MCF 10A (cell line): ENCODE measurements at regions of chr1 and their contacts with region 1.

Region 1: GRCh38 chr1:152954434-152954833 is 7.4 kb downstream of the SPRR5 start:
- DNase-seq: peak; percentile 85
- H3K4me3 Mint-ChIP-seq: peak overlapping the region; percentile 48
- H3K27ac Mint-ChIP-seq: peak overlapping the region; percentile 5
- H3K4me1 Mint-ChIP-seq: peaks cover 24% of the 10 kb centered on the region
- H3K27me3 Mint-ChIP-seq: no peaks in the 10 kb centered on the region
- CTCF ChIP-seq: no peak

Region 2: DNA sequence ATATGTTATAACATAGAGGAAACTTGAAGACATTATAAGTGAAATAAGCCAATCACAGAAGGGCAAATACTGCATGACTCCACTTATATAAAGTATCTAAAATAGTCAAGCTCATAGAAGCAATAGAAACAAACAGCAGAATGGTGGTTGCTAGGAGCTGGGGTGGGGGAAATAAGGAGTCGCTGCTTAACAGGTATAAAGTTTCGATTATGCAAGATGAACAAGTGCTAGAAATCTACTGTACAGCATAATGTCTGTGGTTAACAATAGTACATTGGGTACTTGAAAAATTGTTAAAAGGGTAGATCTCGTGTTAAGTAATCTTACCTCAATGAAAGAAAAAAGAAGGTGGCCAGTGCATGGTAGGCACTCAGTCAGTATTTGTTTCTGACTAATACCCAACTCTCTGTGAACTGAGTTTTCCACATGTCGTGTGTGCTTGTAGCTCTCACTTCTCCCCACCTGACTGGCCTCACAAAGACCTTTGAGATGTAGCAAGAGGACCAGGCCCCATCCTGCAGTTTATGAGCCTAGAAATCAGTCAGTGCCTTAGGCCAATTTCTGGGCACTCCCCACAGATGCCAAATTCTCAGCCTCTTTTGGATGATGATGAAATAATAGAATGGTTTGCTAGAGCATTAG is 22.1 kb before region 1 on chr1:
- CTCF ChIA-PET with region 1: no interaction called
- POLR2A ChIA-PET with region 1: interaction called, 54 read pairs
- intact Hi-C with region 1: no loop called
- DNase-seq: peak; percentile 89
- H3K4me3 Mint-ChIP-seq: no peak overlapping the region
- H3K27ac Mint-ChIP-seq: peak overlapping the region; percentile 14
- H3K4me1 Mint-ChIP-seq: peaks cover 25% of the 10 kb centered on the region
- H3K27me3 Mint-ChIP-seq: no peaks in the 10 kb centered on the region
- CTCF ChIP-seq: no peak

Region 3: DNA sequence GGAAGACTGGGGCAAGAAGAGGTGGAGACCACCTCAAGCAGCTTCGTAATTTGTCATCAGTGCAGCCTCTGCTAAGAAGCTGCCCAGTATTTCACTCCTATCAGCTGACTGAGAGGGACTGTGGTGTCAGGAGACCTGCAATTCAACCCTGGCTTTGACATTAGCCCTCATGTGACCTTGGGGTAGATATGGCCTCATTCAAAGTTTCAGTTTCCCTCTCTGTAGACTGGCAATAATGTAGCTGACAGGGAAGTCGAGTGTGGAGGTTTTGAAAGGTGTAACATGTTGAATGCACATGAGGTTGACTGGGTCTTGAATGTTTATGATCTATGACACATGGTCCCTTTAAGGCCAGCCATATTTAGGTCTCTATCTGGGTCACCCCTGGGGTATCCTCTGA is 13.8 kb after region 1 on chr1:
- CTCF ChIA-PET with region 1: interaction called, 5 read pairs
- POLR2A ChIA-PET with region 1: interaction called, 30 read pairs
- intact Hi-C with region 1: no loop called
- DNase-seq: no peak
- H3K4me3 Mint-ChIP-seq: no peak overlapping the region
- H3K27ac Mint-ChIP-seq: no peak overlapping the region
- H3K4me1 Mint-ChIP-seq: peaks cover 21% of the 10 kb centered on the region
- H3K27me3 Mint-ChIP-seq: no peaks in the 10 kb centered on the region
- CTCF ChIP-seq: no peak

Region 4: DNA sequence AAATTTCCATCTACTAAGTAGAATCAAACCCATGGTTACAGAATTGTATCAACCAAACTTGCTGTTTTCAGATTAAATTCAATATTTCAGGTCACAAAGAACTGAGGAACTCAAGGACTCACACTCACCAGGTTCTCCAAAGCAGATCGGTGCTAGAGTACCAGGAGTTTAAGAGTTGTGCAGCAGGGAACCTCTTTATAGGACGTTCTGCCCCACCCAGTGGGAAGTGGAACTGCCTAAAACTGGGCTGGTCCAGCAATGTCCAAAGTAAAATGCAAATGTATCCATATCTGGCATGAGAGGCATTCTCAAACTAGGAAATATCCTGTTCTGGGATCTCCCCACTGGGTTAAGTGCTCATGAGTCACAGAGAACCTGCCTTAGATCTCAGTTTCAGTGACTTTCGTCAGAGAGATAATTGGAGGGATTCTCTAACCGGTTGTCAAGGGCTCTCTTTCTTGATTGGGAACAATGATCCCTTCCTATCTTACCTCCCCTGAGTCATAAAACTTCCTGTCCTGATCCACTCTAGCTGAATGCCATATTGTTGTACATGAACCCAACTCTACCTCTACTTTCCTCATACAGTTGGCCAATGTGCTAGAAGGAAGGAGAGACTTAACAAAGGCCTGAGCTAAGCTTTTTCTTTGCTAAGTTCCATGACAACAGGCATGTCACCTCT is 86.7 kb after region 1 on chr1 and contains the start of gene SPRR2D:
- CTCF ChIA-PET with region 1: no interaction called
- POLR2A ChIA-PET with region 1: interaction called, 10 read pairs
- intact Hi-C with region 1: no loop called
- DNase-seq: peak; percentile 54
- H3K4me3 Mint-ChIP-seq: peak within 1 kb of the TSS; percentile 37
- H3K27ac Mint-ChIP-seq: peak within 1 kb of the TSS; percentile 89
- H3K4me1 Mint-ChIP-seq: peaks cover 30% of the 10 kb centered on the region
- H3K27me3 Mint-ChIP-seq: no peaks in the 10 kb centered on the region
- CTCF ChIP-seq: no peak
- total RNA-seq, gene SPRR2D: 430 and 1,071 TPM in 2 replicates